Ovary (tissue), 10 donors: ENCODE measurements at regions of chr22 and their contacts with region 1.

Region 1: GRCh38 chr22:39405346-39406085 is 5.9 kb downstream of the TAB1 start:
- DNase-seq: peak; percentile 54 to 75 (median 64)
- H3K4me3 ChIP-seq: no peak overlapping the region
- H3K27ac ChIP-seq: peak overlapping the region in 1 of 2 donors; percentile 29
- H3K4me1 ChIP-seq: peaks cover 14% of the 10 kb centered on the region
- H3K27me3 ChIP-seq: no peaks in the 10 kb centered on the region
- CTCF ChIP-seq: peak in 1 of 3 donors; percentile 9
- EP300 ChIP-seq: no peak
- POLR2A ChIP-seq: no peak

Region 2: GRCh38 chr22:39502109-39502788 is 96.7 kb after region 1 on chr22 and contains the start of gene MIEF1:
- intact Hi-C with region 1: loop called in 2 of 4 experiments (anchors 10 kb)
- DNase-seq: peak; percentile 96 to 98 (median 98)
- H3K4me3 ChIP-seq: peak within 1 kb of the TSS; percentile 95
- H3K27ac ChIP-seq: peak within 1 kb of the TSS; percentile 69 to 91
- H3K4me1 ChIP-seq: peaks cover 15% of the 10 kb centered on the region
- H3K27me3 ChIP-seq: no peaks in the 10 kb centered on the region
- CTCF ChIP-seq: no peak
- EP300 ChIP-seq: no peak
- POLR2A ChIP-seq: peak; percentile 50
- total RNA-seq, gene MIEF1: 13.1 to 23.9 (median 19.9) TPM